Panc1 (cell line): ENCODE measurements at regions of chr21 and their contacts with region 1.

Region 1: GRCh38 chr21:42758721-42759593 is 105.5 kb downstream of the PDE9A start:
- DNase-seq: no peak
- ATAC-seq: no peak
- H3K4me3 ChIP-seq: no peak overlapping the region
- H3K27ac ChIP-seq: no peak overlapping the region
- H3K4me1 ChIP-seq: no peaks in the 10 kb centered on the region
- H3K27me3 ChIP-seq: no peaks in the 10 kb centered on the region
- CTCF ChIP-seq: no peak

Region 2: DNA sequence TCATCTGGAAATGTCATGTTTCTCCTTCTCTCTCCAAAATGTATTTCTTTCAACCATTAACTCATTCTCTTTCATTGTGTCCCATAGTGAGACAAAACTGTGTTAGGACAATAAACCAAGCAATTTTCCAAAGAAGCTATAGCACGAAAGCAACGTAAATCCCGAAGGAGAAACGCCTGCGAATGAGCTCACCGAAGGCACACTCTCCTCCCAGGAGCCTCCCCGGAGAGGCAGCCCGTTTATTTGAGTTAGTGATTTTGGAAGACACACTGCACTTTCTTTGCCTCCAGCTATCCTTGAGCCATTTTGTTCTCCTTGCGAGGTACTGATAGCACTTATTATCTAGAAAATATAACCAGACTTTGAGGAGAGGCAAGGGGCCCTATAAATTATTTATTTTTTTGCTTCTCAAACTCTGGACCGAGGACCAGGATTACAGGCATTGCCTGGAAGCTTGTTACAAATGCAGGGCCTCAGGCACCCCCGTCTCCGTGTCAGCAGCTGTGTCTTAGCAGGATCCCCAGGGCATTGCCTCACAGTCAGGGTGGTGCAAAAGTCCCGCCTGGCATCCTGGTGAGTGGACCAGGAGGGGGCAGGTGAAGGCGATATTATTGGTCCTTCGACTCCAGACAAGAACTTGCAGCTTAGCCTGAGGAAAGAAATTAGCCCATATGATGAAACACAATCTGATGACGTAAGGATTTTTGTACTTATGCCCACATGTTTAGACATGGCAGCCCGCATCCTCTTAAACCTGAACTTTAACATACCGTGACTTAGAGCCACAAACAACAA is 304.0 kb before region 1 on chr21:
- CTCF ChIA-PET with region 1: no interaction called
- POLR2A ChIA-PET with region 1: no interaction called
- in situ Hi-C with region 1: no loop called
- intact Hi-C with region 1: no loop called
- DNase-seq: no peak
- ATAC-seq: no peak
- H3K4me3 ChIP-seq: no peak overlapping the region
- H3K27ac ChIP-seq: no peak overlapping the region
- H3K4me1 ChIP-seq: no peaks in the 10 kb centered on the region
- H3K27me3 ChIP-seq: no peaks in the 10 kb centered on the region
- CTCF ChIP-seq: no peak

Region 3: GRCh38 chr21:42679319-42680260 is 79.4 kb before region 1 on chr21:
- CTCF ChIA-PET with region 1: interaction called, 15 read pairs
- POLR2A ChIA-PET with region 1: no interaction called
- in situ Hi-C with region 1: no loop called
- intact Hi-C with region 1: no loop called
- DNase-seq: no peak
- ATAC-seq: no peak
- H3K4me3 ChIP-seq: no peak overlapping the region
- H3K27ac ChIP-seq: no peak overlapping the region
- H3K4me1 ChIP-seq: no peaks in the 10 kb centered on the region
- H3K27me3 ChIP-seq: no peaks in the 10 kb centered on the region; the same call in 1 of the 2 replicates
- CTCF ChIP-seq: no peak

Region 4: GRCh38 chr21:42737951-42738590 is 20.9 kb before region 1 on chr21:
- CTCF ChIA-PET with region 1: no interaction called
- POLR2A ChIA-PET with region 1: no interaction called
- in situ Hi-C with region 1: no loop called
- intact Hi-C with region 1: no loop called
- DNase-seq: no peak
- ATAC-seq: no peak
- H3K4me3 ChIP-seq: no peak overlapping the region
- H3K27ac ChIP-seq: no peak overlapping the region
- H3K4me1 ChIP-seq: no peaks in the 10 kb centered on the region
- H3K27me3 ChIP-seq: no peaks in the 10 kb centered on the region; the same call in 1 of the 2 replicates
- CTCF ChIP-seq: no peak